ENCODE measurements at regions of chr1 and their contacts with region 1.

Region 1: DNA sequence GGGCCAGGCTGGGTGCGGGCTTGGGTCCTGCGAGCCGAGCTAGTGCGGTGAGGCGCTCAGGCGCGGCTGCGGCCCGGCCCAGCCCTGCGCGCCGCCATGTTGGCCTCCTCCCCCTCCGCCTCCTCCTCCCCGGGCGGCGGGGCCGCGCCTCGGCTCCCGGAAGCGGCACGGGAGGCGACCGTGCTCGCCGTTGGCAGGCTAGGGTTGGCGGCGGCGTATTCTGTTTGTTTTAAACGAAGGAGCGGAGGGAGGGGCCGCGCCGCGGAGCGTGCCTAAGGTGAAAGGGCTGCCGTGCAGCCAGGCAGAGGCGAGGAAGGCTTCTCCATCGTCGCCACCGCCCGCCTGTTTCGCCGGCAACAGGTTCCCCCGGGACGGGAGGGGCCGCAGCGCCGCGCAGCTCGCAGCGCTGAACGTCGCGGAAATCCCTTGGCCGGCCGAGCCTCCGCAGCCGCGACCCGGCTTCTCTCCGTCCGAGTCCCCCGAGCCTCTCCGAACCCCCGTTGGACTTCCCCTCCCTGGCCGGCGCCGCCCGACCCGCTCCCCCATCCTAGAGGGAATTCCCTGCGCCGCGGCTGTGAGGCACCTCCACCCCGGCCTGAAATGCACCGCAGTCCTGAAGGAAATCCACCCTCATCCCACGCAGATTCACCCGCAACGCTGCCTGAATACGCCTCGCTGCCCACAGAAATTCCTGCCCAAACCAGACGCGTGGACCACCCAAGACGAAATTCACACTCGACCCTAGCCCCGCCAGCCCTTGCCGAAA is at the start of gene USP24:
- DNase-seq: peak; percentile 60 to 93 (median 82)
- ATAC-seq: peak; percentile 76
- H3K4me3 ChIP-seq: peak within 1 kb of the TSS; percentile 76 to 83
- H3K4me3 Mint-ChIP-seq: peak within 1 kb of the TSS; percentile 97
- H3K27ac ChIP-seq: peak within 1 kb of the TSS; percentile 81 to 92
- H3K27ac Mint-ChIP-seq: peak within 1 kb of the TSS; percentile 98
- H3K4me1 ChIP-seq: peaks cover 45% of the 10 kb centered on the region
- H3K4me1 Mint-ChIP-seq: peaks cover 68% of the 10 kb centered on the region
- H3K27me3 ChIP-seq: no peaks in the 10 kb centered on the region
- H3K27me3 Mint-ChIP-seq: no peaks in the 10 kb centered on the region
- CTCF ChIP-seq: no peak
- total RNA-seq, gene USP24: 74.0 to 79.6 TPM

Region 2: DNA sequence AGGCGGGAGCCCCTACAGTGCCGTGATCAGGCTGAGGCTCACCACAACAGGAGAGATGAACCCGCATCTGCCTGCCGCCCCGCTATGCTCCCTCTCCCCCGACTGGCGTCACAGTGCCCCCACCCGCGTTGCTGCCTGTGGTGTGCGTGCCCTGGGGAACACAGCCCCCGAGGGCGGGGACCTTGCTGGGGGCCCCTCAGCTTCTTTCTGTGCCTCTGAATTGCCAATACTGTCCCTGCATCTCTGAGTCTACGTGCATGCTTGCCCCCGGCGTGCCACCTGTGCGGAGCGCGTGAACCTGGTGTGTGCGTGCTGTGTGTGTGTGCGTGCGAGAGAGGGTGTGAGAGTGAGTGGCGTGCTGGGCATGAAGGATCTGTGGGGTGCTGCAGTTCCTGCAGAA is 461.4 kb before region 1 on chr1:
- CTCF ChIA-PET with region 1: no interaction called
- POLR2A ChIA-PET with region 1: no interaction called
- intact Hi-C with region 1: no loop called
- DNase-seq: no peak
- ATAC-seq: no peak
- H3K4me3 ChIP-seq: no peak overlapping the region
- H3K4me3 Mint-ChIP-seq: no peak overlapping the region
- H3K27ac ChIP-seq: no peak overlapping the region
- H3K27ac Mint-ChIP-seq: no peak overlapping the region
- H3K4me1 ChIP-seq: no peaks in the 10 kb centered on the region
- H3K4me1 Mint-ChIP-seq: no peaks in the 10 kb centered on the region
- H3K27me3 ChIP-seq: no peaks in the 10 kb centered on the region
- H3K27me3 Mint-ChIP-seq: no peaks in the 10 kb centered on the region
- CTCF ChIP-seq: no peak

Region 3: DNA sequence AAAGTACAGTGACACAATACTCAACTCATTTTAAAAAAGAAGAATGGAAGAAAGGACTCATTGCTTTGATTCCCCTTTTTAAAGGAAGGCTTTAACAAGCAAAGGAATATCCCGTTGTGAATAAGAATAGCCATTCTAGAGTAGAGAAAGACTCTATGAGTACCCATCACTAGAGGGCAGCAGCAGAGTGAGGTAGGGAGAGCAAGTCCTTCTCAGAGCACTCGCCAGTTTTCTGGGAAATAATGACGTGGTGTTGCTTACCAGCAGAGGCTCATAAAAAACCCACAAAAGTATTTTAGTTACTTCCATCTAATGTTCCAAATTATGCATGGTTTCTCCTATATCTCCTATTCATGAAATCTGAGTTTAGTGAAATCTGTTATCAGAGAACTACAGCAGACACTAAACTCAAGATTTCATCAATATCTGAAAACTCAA is 74.9 kb before region 1 on chr1:
- CTCF ChIA-PET with region 1: interaction called, 5 read pairs
- POLR2A ChIA-PET with region 1: no interaction called
- intact Hi-C with region 1: loop called (anchors 2 to 5 kb)
- DNase-seq: peak; percentile 25 to 88 (median 69)
- ATAC-seq: peak; percentile 94
- H3K4me3 ChIP-seq: no peak overlapping the region
- H3K4me3 Mint-ChIP-seq: no peak overlapping the region
- H3K27ac ChIP-seq: no peak overlapping the region
- H3K27ac Mint-ChIP-seq: peak overlapping the region; percentile 53
- H3K4me1 ChIP-seq: no peaks in the 10 kb centered on the region
- H3K4me1 Mint-ChIP-seq: peaks cover 15% of the 10 kb centered on the region
- H3K27me3 ChIP-seq: no peaks in the 10 kb centered on the region
- H3K27me3 Mint-ChIP-seq: no peaks in the 10 kb centered on the region
- CTCF ChIP-seq: peak; percentile 82

Region 4: GRCh38 chr1:55164906-55165305 is 50.5 kb before region 1 on chr1:
- CTCF ChIA-PET with region 1: no interaction called
- POLR2A ChIA-PET with region 1: interaction called, 3 read pairs
- intact Hi-C with region 1: loop called in 1 of 2 experiments (anchors 10 kb)
- DNase-seq: no peak
- ATAC-seq: peak; percentile 42
- H3K4me3 ChIP-seq: no peak overlapping the region
- H3K4me3 Mint-ChIP-seq: no peak overlapping the region
- H3K27ac ChIP-seq: no peak overlapping the region
- H3K27ac Mint-ChIP-seq: peak overlapping the region; percentile 23
- H3K4me1 ChIP-seq: no peaks in the 10 kb centered on the region
- H3K4me1 Mint-ChIP-seq: peaks cover 8% of the 10 kb centered on the region
- H3K27me3 ChIP-seq: no peaks in the 10 kb centered on the region
- H3K27me3 Mint-ChIP-seq: no peaks in the 10 kb centered on the region
- CTCF ChIP-seq: no peak

Region 5: GRCh38 chr1:55180075-55180670 is 35.3 kb before region 1 on chr1:
- CTCF ChIA-PET with region 1: interaction called, 3 read pairs
- POLR2A ChIA-PET with region 1: no interaction called
- intact Hi-C with region 1: loop called (anchors 5 kb)
- DNase-seq: no peak
- ATAC-seq: no peak
- H3K4me3 ChIP-seq: no peak overlapping the region
- H3K4me3 Mint-ChIP-seq: no peak overlapping the region
- H3K27ac ChIP-seq: no peak overlapping the region
- H3K27ac Mint-ChIP-seq: peak overlapping the region; percentile 68
- H3K4me1 ChIP-seq: no peaks in the 10 kb centered on the region
- H3K4me1 Mint-ChIP-seq: peaks cover 52% of the 10 kb centered on the region
- H3K27me3 ChIP-seq: no peaks in the 10 kb centered on the region
- H3K27me3 Mint-ChIP-seq: no peaks in the 10 kb centered on the region
- CTCF ChIP-seq: no peak

Region 6: DNA sequence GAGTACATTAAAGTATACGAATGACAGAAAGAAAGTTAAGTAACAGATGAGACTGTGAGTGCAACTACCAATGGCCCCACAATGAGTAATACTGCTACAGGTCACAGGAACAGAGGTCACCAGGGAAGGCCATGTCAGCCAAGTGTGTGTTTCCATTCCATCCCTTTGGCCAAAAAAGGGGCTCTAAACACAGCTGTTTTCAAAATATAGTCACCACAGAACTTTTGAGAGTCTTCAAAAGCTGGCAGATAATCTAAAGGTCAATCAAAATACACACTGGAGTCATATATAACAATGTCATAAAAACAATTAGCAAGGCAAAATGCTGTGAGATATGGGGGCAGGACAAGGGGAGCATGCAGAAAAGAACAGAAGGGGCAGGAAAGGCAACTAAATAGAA is 10.4 kb before region 1 on chr1:
- CTCF ChIA-PET with region 1: interaction called, 4 read pairs
- POLR2A ChIA-PET with region 1: interaction called, 13 read pairs
- intact Hi-C with region 1: loop called in 1 of 2 experiments (anchors 1 kb)
- DNase-seq: no peak
- ATAC-seq: no peak
- H3K4me3 ChIP-seq: no peak overlapping the region
- H3K4me3 Mint-ChIP-seq: no peak overlapping the region
- H3K27ac ChIP-seq: no peak overlapping the region
- H3K27ac Mint-ChIP-seq: peak overlapping the region; percentile 34
- H3K4me1 ChIP-seq: peaks cover 58% of the 10 kb centered on the region
- H3K4me1 Mint-ChIP-seq: peaks cover 83% of the 10 kb centered on the region
- H3K27me3 ChIP-seq: no peaks in the 10 kb centered on the region
- H3K27me3 Mint-ChIP-seq: no peaks in the 10 kb centered on the region
- CTCF ChIP-seq: no peak

Region 7: GRCh38 chr1:55257958-55258357 is 42.5 kb after region 1 on chr1:
- CTCF ChIA-PET with region 1: no interaction called
- POLR2A ChIA-PET with region 1: interaction called, 3 read pairs
- intact Hi-C with region 1: loop called (anchors 5 kb)
- DNase-seq: peak; percentile 37 to 91 (median 74)
- ATAC-seq: peak; percentile 97
- H3K4me3 ChIP-seq: no peak overlapping the region
- H3K4me3 Mint-ChIP-seq: peak overlapping the region; percentile 26
- H3K27ac ChIP-seq: no peak overlapping the region
- H3K27ac Mint-ChIP-seq: peak overlapping the region; percentile 81
- H3K4me1 ChIP-seq: peaks cover 12% of the 10 kb centered on the region
- H3K4me1 Mint-ChIP-seq: peaks cover 17% of the 10 kb centered on the region
- H3K27me3 ChIP-seq: no peaks in the 10 kb centered on the region
- H3K27me3 Mint-ChIP-seq: no peaks in the 10 kb centered on the region
- CTCF ChIP-seq: no peak

Region 8: DNA sequence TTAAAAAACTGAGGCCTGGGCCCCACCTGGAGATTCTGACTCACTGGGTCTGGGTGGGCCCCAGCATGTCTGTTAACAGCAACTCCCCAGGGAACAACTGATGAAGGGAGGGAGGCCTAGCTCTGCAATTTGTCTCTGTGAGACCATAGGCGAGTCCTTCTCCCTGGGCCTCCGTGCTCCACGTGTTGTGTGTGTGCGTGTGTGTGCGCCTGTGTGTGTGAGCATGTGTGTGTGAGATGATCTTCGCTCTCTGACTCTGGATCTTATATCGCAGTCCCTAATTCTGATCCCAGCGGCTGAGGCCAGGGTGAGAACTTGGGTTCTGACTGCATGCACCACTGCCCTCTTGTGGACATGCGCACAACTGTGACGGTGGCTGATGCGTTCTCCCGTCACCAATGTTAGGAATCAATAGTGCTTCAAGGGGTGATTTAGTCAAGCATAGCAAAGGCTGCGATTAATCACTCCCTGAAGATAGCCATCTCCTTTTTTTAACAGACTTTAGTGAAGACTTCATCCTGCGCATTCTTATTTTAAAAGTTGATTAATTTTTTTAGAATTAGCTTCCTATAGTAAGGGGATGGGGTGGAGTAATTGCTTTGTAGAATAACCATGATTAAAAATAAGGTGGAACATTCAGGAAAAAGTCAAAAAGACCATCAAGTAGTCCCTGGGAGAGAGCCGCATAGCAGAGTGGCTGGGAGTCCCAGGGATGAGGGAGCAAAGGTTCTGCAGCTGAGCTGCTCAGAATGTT is 62.1 kb after region 1 on chr1:
- CTCF ChIA-PET with region 1: interaction called, 14 read pairs
- POLR2A ChIA-PET with region 1: no interaction called
- intact Hi-C with region 1: loop called (anchors 1 to 5 kb)
- DNase-seq: peak; percentile 60 to 87 (median 79)
- ATAC-seq: peak; percentile 96
- H3K4me3 ChIP-seq: no peak overlapping the region
- H3K4me3 Mint-ChIP-seq: no peak overlapping the region
- H3K27ac ChIP-seq: no peak overlapping the region
- H3K27ac Mint-ChIP-seq: no peak overlapping the region
- H3K4me1 ChIP-seq: no peaks in the 10 kb centered on the region
- H3K4me1 Mint-ChIP-seq: peaks cover 7% of the 10 kb centered on the region
- H3K27me3 ChIP-seq: no peaks in the 10 kb centered on the region
- H3K27me3 Mint-ChIP-seq: no peaks in the 10 kb centered on the region
- CTCF ChIP-seq: peak; percentile 84

Measured in CD8-positive, alpha-beta T cell (primary cell).